Activated CD4-positive, alpha-beta T cell treated with anti-CD3 and anti-CD28 coated beads, Interleukin-2, amount 10 ng/mL, durations not matched to agents 7 days and 5 days (primary cell): ENCODE measurements at regions of chr2 and their contacts with region 1.

Region 1: DNA sequence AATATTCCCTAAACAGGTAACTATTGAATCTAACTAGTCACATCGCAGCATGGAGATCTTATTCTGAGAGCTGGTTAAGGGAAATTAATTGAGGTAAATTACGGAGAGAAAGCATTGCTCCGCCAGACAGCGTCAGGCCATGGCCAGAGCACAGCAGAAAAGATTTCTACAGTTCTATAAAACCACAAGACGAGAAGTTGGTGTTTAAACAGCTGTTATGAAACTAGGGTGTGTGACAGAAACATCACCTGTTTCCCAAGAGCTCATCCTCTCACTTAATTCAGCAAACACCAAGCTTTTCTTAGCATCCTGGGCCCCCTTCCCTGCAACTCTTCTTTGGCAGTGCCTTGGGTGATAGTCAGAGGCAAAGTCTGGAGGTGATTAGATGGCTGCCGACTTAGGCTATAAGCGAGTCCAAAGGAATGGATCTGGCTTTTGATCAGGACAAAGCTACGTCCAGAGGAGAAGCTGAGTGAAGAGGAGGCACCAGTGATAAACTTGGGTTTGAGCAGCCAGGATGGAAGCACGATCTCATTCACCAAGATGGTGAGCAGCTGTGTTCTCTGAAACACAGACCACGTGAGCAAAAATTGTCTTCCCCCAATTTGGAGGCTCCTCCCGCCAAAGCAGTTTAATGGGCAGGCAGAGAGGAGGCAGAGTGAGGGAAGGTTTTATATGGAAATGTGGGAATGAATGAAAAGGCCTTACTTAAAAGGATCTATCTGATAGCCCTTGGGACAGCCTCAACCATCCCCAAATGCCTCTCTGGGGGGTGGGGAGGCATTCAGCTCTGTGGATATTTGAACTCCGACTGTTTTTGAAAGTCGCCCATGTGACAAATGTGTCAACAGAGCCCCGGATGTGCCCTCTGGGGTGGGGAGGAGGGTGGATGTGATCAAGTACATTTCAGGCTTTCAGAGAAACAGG is 57.8 kb downstream of the PKDCC start:
- DNase-seq: peak; percentile 93
- H3K4me3 Mint-ChIP-seq: no peak overlapping the region
- H3K27ac Mint-ChIP-seq: no peak overlapping the region
- H3K4me1 Mint-ChIP-seq: peaks cover 14% of the 10 kb centered on the region
- H3K27me3 Mint-ChIP-seq: no peaks in the 10 kb centered on the region

Region 2: GRCh38 chr2:42117923-42118753 is 12.5 kb after region 1 on chr2:
- CTCF ChIA-PET with region 1: interaction called, 25 read pairs
- POLR2A ChIA-PET with region 1: no interaction called
- DNase-seq: no peak
- H3K4me3 Mint-ChIP-seq: no peak overlapping the region
- H3K27ac Mint-ChIP-seq: peak overlapping the region; percentile 58
- H3K4me1 Mint-ChIP-seq: peaks cover 39% of the 10 kb centered on the region
- H3K27me3 Mint-ChIP-seq: peaks cover 3% of the 10 kb centered on the region

Region 3: DNA sequence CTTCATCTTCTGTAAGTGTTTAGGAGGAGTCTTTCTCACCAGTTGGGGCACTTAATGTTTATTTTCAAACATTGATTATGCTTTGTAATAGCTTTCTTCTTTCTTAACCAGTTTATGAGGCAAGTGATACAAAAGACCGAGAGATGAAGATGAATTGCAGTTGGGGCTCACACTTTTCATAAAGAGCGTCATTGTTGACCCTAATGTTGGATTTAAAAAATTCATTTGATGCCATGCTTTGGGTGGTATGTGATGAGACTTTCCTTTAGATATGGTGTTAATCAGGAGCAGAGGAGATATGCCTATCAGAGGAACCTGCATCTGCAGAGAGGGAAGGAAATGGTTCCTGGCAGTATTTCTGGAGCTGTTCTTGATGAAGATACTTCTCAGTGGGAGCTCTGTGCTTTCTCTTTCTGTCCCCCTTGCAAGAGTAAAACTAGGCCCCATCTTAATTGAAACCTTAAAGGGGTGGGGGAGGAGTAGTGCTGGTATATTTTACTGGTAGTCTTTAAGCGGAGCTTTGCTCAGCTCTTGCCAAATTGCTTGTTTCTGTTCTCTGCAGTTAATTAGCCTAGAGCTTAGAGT is 65.9 kb after region 1 on chr2:
- CTCF ChIA-PET with region 1: interaction called, 3 read pairs
- POLR2A ChIA-PET with region 1: interaction called, 14 read pairs
- DNase-seq: peak; percentile 41
- H3K4me3 Mint-ChIP-seq: no peak overlapping the region
- H3K27ac Mint-ChIP-seq: no peak overlapping the region
- H3K4me1 Mint-ChIP-seq: peaks cover 35% of the 10 kb centered on the region
- H3K27me3 Mint-ChIP-seq: no peaks in the 10 kb centered on the region